Naive thymus-derived CD4-positive, alpha-beta T cell (primary cell): ENCODE measurements at regions of chrX and their contacts with region 1.

Region 1: GRCh38 chrX:47650164-47651042 is at the start of gene ELK1:
- DNase-seq: peak; percentile 67 to 92 (median 88)
- ATAC-seq: peak; percentile 95
- H3K4me3 ChIP-seq: peak within 1 kb of the TSS; percentile 70
- H3K4me3 Mint-ChIP-seq: peak within 1 kb of the TSS; percentile 87 to 96 (median 90)
- H3K27ac ChIP-seq: peak within 1 kb of the TSS; percentile 85
- H3K27ac Mint-ChIP-seq: peak within 1 kb of the TSS; percentile 89 to 97 (median 95)
- H3K4me1 ChIP-seq: peaks cover 12 to 16% of the 10 kb centered on the region in 2 donors
- H3K4me1 Mint-ChIP-seq: peaks cover 35 to 52% (median 48%) of the 10 kb centered on the region in 7 donors
- H3K27me3 ChIP-seq: no peaks in the 10 kb centered on the region
- H3K27me3 Mint-ChIP-seq: no peaks in the 10 kb centered on the region
- total RNA-seq, gene ELK1: 29.3 to 62.4 (median 38.1) TPM

Region 2: DNA sequence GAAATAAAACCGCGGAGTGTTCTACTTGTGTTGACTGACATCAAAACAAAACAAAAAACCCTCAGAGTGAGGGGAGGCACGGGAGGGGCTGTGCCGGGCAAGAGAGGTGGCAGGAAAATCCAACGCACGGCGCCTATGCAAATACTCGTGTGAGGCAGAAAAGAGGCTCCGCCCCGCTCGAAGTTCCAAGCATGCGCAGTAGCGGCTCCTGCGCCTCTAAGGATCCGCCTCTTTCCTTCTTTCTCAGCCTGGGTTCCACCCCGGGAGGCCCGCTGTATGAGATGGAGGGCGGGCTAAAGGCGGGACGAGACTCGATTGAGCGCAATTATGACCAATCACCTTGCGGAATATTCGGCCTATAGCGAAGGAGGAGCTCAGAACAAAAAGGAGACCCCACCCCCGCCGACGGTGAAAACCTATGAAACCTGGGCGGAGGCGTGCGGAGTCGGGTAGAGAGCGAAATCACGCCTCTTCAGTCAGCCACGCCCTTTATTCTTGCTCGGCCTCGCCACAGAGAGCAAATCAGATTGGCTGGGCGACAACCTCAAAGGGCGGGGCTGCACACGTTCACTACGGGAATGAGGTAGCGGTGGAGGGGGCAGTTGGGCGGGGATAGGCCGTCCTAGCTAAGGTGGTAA is 432.6 kb before region 1 on chrX:
- CTCF ChIA-PET with region 1: no interaction called
- POLR2A ChIA-PET with region 1: no interaction called
- intact Hi-C with region 1: loop called in 1 of 2 experiments (anchors 1 kb)
- DNase-seq: peak in 8 of 9 donors; percentile 81 to 100 (median 98)
- ATAC-seq: peak; percentile 86
- H3K4me3 ChIP-seq: peak overlapping the region; percentile 98
- H3K4me3 Mint-ChIP-seq: peak overlapping the region; percentile 89 to 99 (median 95)
- H3K27ac ChIP-seq: peak overlapping the region; percentile 97
- H3K27ac Mint-ChIP-seq: peak overlapping the region; percentile 98 to 100 (median 99)
- H3K4me1 ChIP-seq: peaks cover 16 to 20% of the 10 kb centered on the region in 2 donors
- H3K4me1 Mint-ChIP-seq: peaks cover 26 to 44% (median 41%) of the 10 kb centered on the region in 7 donors
- H3K27me3 ChIP-seq: no peaks in the 10 kb centered on the region
- H3K27me3 Mint-ChIP-seq: peaks cover 0 to 2% (median 0%) of the 10 kb centered on the region in 5 donors

Region 3: DNA sequence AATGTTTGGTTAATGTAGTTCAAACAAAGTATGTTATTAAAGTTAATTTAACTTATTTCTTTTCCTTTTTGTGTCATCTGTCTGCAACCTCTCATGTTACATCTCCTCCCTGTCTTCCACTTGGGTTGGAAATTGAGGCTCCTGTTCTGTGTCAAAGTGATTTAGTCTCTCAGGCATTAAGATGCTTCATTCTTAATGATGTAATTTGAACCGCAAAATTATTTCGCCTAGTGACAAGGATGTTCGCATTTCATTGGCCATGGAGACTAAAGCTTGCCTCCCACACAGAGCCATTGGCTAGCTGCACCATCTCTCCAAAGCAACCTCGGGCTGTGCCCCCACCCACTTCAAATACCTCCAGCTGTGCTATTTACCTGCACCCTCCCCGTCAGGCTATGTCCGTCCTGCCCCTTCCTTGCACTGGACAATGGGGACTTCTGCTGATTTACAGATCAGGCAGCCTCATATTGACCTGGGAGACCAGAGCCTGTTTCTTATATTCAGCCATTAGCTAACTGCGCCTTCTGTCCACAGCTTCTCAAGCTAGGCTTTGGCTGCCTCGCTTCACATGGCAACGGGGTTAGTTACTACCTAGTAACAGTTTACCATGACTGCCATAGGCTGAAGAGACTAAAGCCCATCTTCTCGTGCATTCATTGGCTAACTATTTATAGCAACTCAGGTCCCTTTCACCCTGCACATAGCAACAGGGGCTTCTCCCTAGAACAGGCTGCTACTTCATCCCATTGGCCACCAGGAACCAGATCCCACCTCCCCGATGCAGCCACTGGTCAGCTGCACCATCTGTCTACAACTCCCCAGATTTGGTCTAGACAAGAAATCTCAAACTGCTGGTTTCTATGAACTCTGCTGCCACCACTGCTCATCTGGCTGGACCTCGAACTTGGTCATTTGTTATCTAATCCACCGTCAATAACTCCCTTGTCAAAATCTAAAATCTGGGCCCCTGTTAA is 288.6 kb before region 1 on chrX:
- CTCF ChIA-PET with region 1: no interaction called
- POLR2A ChIA-PET with region 1: no interaction called
- intact Hi-C with region 1: loop called in 1 of 2 experiments (anchors 10 kb)
- DNase-seq: peak in 3 of 9 donors; percentile 8 to 16 (median 10)
- ATAC-seq: peak; percentile 75
- H3K4me3 ChIP-seq: no peak overlapping the region
- H3K4me3 Mint-ChIP-seq: peak overlapping the region in 5 of 10 donors; percentile 3 to 29 (median 24)
- H3K27ac ChIP-seq: no peak overlapping the region
- H3K27ac Mint-ChIP-seq: peak overlapping the region in 4 of 9 donors; percentile 15 to 40 (median 31)
- H3K4me1 ChIP-seq: peaks cover 6 to 9% of the 10 kb centered on the region in 2 donors
- H3K4me1 Mint-ChIP-seq: peaks cover 10 to 48% (median 30%) of the 10 kb centered on the region in 7 donors
- H3K27me3 ChIP-seq: no peaks in the 10 kb centered on the region
- H3K27me3 Mint-ChIP-seq: no peaks in the 10 kb centered on the region

Region 4: GRCh38 chrX:47482512-47483309 is 167.7 kb before region 1 on chrX and contains the start of gene ZNF41:
- CTCF ChIA-PET with region 1: no interaction called
- POLR2A ChIA-PET with region 1: no interaction called
- intact Hi-C with region 1: loop called (anchors 1 to 2 kb)
- DNase-seq: peak; percentile 48 to 84 (median 76)
- ATAC-seq: peak; percentile 95
- H3K4me3 ChIP-seq: peak within 1 kb of the TSS; percentile 85
- H3K4me3 Mint-ChIP-seq: peak within 1 kb of the TSS; percentile 81 to 97 (median 90)
- H3K27ac ChIP-seq: peak within 1 kb of the TSS; percentile 88
- H3K27ac Mint-ChIP-seq: peak within 1 kb of the TSS; percentile 82 to 98 (median 96)
- H3K4me1 ChIP-seq: peaks cover 9 to 22% of the 10 kb centered on the region in 2 donors
- H3K4me1 Mint-ChIP-seq: peaks cover 22 to 50% (median 37%) of the 10 kb centered on the region in 7 donors
- H3K27me3 ChIP-seq: no peaks in the 10 kb centered on the region
- H3K27me3 Mint-ChIP-seq: no peaks in the 10 kb centered on the region
- total RNA-seq, gene ZNF41: 7.5 to 17.8 (median 14.7) TPM

Region 5: DNA sequence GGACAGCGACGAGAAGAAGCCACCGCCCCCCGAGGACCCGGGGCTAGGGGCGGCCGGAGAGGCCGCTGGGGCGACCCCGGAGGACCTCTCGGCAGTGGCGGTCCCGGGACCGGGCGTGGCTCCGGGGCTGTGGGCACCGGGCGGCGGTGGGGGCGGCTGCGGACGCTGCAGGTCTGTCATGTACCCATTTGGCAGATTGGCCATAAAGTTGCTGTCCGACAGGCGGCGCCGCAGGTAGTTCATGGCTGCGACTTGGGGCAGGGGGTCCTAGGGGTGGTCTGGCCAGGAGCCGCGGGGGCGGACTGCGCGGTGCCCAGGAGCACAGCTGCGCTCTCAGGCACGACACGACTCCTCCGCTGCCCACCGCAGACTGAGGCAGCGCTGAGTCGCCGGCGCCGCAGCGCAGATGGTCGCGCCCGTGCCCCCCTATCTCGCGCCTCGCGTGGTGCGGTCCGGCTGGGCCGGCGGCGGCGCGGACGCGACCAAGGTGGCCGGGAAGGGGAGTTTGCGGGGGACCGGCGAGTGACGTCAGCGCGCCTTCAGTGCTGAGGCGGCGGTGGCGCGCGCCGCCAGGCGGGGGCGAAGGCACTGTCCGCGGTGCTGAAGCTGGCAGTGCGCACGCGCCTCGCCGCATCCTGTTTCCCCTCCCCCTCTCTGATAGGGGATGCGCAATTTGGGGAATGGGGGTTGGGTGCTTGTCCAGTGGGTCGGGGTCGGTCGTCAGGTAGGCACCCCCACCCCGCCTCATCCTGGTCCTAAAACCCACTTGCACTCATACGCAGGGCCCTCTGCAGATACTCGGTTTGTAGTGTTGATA is 30.7 kb before region 1 on chrX and contains the start of gene SYN1:
- CTCF ChIA-PET with region 1: no interaction called
- POLR2A ChIA-PET with region 1: no interaction called
- intact Hi-C with region 1: loop called in 1 of 2 experiments (anchors 1 kb)
- DNase-seq: peak; percentile 66 to 84 (median 75)
- ATAC-seq: peak; percentile 96
- H3K4me3 ChIP-seq: peak within 1 kb of the TSS; percentile 35
- H3K4me3 Mint-ChIP-seq: peak within 1 kb of the TSS; percentile 49 to 76 (median 69)
- H3K27ac ChIP-seq: no peak within 1 kb of the TSS
- H3K27ac Mint-ChIP-seq: peak within 1 kb of the TSS in 3 of 9 donors; percentile 32 to 63 (median 39)
- H3K4me1 ChIP-seq: peaks cover 4% of the 10 kb centered on the region in 2 donors
- H3K4me1 Mint-ChIP-seq: peaks cover 0 to 38% (median 13%) of the 10 kb centered on the region in 7 donors
- H3K27me3 ChIP-seq: no peaks in the 10 kb centered on the region
- H3K27me3 Mint-ChIP-seq: peaks cover 0 to 61% (median 3%) of the 10 kb centered on the region in 5 donors
- total RNA-seq, gene SYN1: 0.24 to 1.5 (median 0.97) TPM

Region 6: DNA sequence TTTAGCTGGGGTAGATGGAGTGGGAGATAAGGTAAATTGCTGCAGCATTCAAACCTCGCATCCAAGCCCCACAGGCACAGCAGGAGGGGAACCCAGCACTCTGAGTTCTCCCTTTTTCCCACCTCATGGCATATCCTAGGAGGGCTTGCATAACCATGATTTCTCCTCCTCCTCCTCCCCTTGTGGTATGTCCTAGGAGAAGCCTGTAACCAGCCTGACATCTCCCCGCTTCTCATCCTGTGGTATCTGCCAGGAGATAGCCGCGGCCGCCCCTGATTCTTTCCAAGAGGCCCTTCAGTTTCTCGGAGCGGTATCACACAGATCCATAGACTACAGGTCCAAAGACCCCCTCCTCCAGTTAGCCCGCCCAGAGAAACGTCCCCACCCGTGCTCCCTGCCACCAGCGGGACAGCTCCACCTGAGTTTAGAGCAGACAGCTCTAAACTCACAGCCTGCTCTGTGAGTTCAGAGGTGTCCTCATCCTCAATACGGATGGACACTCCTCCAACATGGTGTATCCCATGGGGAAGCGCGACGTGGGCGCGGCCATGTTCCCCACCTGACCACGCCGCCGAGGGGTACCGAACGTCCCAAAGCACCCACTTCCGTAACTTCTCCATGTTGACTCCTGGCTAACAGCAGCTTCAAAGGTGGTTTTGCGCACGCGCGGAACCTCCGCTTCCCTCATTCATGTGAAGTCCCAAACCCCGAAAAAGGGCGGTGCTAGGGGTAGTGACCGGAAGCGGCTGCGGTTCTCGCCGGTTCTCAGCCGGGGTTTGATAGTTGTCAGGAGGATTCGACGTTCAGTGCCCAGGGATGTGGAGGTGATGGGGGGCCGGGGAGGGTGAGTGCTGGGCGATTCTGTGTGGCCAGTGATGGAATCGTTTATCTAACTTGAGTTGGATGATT is 186.0 kb after region 1 on chrX and contains the start of gene ZNF81:
- CTCF ChIA-PET with region 1: no interaction called
- POLR2A ChIA-PET with region 1: no interaction called
- intact Hi-C with region 1: loop called in 1 of 2 experiments (anchors 1 kb)
- DNase-seq: peak; percentile 73 to 91 (median 83)
- ATAC-seq: peak; percentile 96
- H3K4me3 ChIP-seq: peak within 1 kb of the TSS; percentile 67
- H3K4me3 Mint-ChIP-seq: peak within 1 kb of the TSS; percentile 96 to 99 (median 98)
- H3K27ac ChIP-seq: peak within 1 kb of the TSS; percentile 79
- H3K27ac Mint-ChIP-seq: peak within 1 kb of the TSS; percentile 94 to 99 (median 97)
- H3K4me1 ChIP-seq: peaks cover 4 to 6% of the 10 kb centered on the region in 2 donors
- H3K4me1 Mint-ChIP-seq: peaks cover 1 to 36% (median 26%) of the 10 kb centered on the region in 7 donors
- H3K27me3 ChIP-seq: no peaks in the 10 kb centered on the region
- H3K27me3 Mint-ChIP-seq: no peaks in the 10 kb centered on the region
- total RNA-seq, gene ZNF81: 11.0 to 14.7 (median 11.7) TPM

Region 7: GRCh38 chrX:48574270-48575266 is 924.2 kb after region 1 on chrX and contains the start of gene RBM3:
- CTCF ChIA-PET with region 1: no interaction called
- POLR2A ChIA-PET with region 1: no interaction called
- intact Hi-C with region 1: loop called in 1 of 2 experiments (anchors 10 kb)
- DNase-seq: peak; percentile 64 to 96 (median 92)
- ATAC-seq: peak; percentile 94
- H3K4me3 ChIP-seq: peak within 1 kb of the TSS; percentile 68
- H3K4me3 Mint-ChIP-seq: peak within 1 kb of the TSS; percentile 88 to 100 (median 97)
- H3K27ac ChIP-seq: peak within 1 kb of the TSS; percentile 99
- H3K27ac Mint-ChIP-seq: peak within 1 kb of the TSS; percentile 95 to 100 (median 99)
- H3K4me1 ChIP-seq: peaks cover 16 to 20% of the 10 kb centered on the region in 2 donors
- H3K4me1 Mint-ChIP-seq: peaks cover 6 to 32% (median 25%) of the 10 kb centered on the region in 7 donors
- H3K27me3 ChIP-seq: no peaks in the 10 kb centered on the region
- H3K27me3 Mint-ChIP-seq: no peaks in the 10 kb centered on the region
- total RNA-seq, gene RBM3: 176 to 374 (median 329) TPM